Activated CD4-positive, alpha-beta memory T cell treated with anti-CD3 and anti-CD28 coated beads, Interleukin-2, amount 10 ng/mL, durations not matched to agents 7 days and 5 days (primary cell): ENCODE measurements at regions of chr20 and their contacts with region 1.

Region 1: DNA sequence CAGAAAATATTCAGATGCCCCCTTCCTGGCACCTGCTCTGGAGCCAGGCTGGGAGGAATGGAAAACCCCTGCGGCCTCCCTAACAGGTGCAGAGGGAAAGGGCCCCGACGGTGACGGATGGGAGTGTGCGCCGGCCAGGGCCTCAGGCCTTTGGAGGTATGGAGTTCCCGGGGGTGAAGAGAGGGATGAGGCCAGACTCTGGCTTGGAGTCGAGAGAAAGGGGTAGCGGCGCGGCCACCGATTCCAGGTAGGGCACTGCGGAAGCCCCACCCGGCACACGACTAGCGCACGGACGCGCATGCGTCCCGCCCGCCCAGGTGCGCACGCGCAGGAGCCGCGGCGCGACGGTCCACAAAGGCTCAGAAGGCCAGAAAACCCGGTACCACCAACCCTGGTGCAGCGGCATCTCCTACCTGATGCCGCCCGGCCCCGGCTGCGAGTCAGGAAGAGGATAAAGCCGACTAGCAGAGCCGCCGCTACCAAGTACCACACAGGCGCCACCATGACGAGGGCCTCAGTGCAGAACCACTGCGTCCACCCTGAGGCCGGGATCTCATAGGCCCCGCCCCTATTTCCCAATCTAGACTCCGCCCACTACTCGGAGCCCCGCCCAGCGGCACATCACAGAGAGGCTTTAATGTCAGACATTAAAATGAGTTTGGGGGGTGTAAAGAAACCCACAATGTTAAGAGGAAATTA is at the start of gene DDRGK1:
- DNase-seq: peak; percentile 93
- H3K4me3 Mint-ChIP-seq: peak within 1 kb of the TSS; percentile 89
- H3K27ac Mint-ChIP-seq: peak within 1 kb of the TSS; percentile 91
- H3K4me1 Mint-ChIP-seq: peaks cover 28% of the 10 kb centered on the region
- H3K27me3 Mint-ChIP-seq: no peaks in the 10 kb centered on the region
- total RNA-seq, gene DDRGK1: 66.6 to 68.3 TPM

Region 2: GRCh38 chr20:3193806-3194616 is 10.3 kb before region 1 on chr20:
- CTCF ChIA-PET with region 1: no interaction called
- POLR2A ChIA-PET with region 1: interaction called, 13 read pairs
- DNase-seq: no peak
- H3K4me3 Mint-ChIP-seq: no peak overlapping the region
- H3K27ac Mint-ChIP-seq: no peak overlapping the region
- H3K4me1 Mint-ChIP-seq: peaks cover 5% of the 10 kb centered on the region
- H3K27me3 Mint-ChIP-seq: no peaks in the 10 kb centered on the region

Region 3: GRCh38 chr20:4444404-4444803 is 1240.1 kb after region 1 on chr20:
- CTCF ChIA-PET with region 1: no interaction called
- POLR2A ChIA-PET with region 1: no interaction called
- DNase-seq: no peak
- H3K4me3 Mint-ChIP-seq: no peak overlapping the region
- H3K27ac Mint-ChIP-seq: no peak overlapping the region
- H3K4me1 Mint-ChIP-seq: no peaks in the 10 kb centered on the region
- H3K27me3 Mint-ChIP-seq: peaks cover 20% of the 10 kb centered on the region